GM23248 (cell line): ENCODE measurements at regions of chr4 and their contacts with region 1.

Region 1: DNA sequence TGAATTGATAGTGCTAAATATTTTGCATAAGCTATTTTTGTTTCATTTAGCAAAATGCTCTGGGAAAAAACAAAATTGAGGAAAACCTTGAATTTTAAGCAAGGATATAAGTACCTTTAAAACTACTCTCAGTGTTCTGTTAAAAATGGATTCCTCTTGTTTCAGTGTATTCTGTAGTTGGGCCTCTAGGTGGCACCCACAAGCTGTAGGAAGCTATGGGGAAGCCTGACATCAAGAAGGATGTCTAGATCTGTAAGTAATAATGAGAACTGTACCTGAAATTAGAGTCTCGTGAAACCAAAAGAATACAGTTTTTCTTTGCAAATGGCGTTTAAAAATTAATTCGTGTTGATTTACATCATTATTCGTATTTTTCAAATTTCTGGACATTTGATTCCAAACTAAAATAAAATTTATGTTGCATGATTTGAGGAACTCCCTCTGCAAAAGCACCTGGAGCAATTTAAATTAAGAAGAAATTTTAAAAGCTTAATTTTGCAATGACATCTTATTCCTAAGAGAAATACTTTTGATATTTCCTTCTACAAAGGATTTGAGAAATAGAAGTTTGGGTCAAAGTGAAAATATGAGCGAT is 51.2 kb downstream of the TMPRSS11E start:
- DNase-seq: peak; percentile 72
- H3K4me3 ChIP-seq: no peak overlapping the region
- H3K27ac ChIP-seq: no peak overlapping the region
- H3K4me1 ChIP-seq: no peaks in the 10 kb centered on the region
- H3K27me3 ChIP-seq: no peaks in the 10 kb centered on the region; the same call in 1 of the 2 replicates

Region 2: DNA sequence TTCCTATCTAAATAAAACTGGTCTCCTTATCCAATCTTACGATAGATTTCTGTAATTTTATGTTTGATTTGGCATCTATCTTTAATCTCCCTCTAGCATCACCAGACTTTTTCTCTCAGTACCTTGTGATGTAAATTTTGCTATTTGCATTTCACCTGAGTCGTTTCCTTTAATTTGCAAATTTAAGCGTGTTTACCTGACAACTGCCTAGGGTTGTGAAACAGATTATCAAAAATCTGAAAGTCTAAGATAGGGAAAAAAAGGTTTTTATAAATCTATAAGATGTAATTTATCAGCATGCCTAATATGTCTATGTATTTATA is 90.7 kb before region 1 on chr4:
- in situ Hi-C with region 1: no loop called
- DNase-seq: no peak
- H3K4me3 ChIP-seq: no peak overlapping the region
- H3K27ac ChIP-seq: no peak overlapping the region
- H3K4me1 ChIP-seq: no peaks in the 10 kb centered on the region
- H3K27me3 ChIP-seq: peaks cover 16% of the 10 kb centered on the region

Region 3: GRCh38 chr4:68630373-68630772 is 131.9 kb after region 1 on chr4:
- in situ Hi-C with region 1: no loop called
- DNase-seq: no peak
- H3K4me3 ChIP-seq: no peak overlapping the region
- H3K27ac ChIP-seq: no peak overlapping the region
- H3K4me1 ChIP-seq: no peaks in the 10 kb centered on the region
- H3K27me3 ChIP-seq: no peaks in the 10 kb centered on the region

Region 4: GRCh38 chr4:69167300-69167699 is 668.8 kb after region 1 on chr4:
- in situ Hi-C with region 1: loop called (anchors 10 kb)
- DNase-seq: peak; percentile 0
- H3K4me3 ChIP-seq: no peak overlapping the region
- H3K27ac ChIP-seq: no peak overlapping the region
- H3K4me1 ChIP-seq: no peaks in the 10 kb centered on the region
- H3K27me3 ChIP-seq: 0 out of 2 replicates have a peak, but pooled peaks cover 2% of the 10 kb centered on the region